CD8-positive, alpha-beta memory T cell (primary cell): ENCODE measurements at regions of chr2 and their contacts with region 1.

Region 1: DNA sequence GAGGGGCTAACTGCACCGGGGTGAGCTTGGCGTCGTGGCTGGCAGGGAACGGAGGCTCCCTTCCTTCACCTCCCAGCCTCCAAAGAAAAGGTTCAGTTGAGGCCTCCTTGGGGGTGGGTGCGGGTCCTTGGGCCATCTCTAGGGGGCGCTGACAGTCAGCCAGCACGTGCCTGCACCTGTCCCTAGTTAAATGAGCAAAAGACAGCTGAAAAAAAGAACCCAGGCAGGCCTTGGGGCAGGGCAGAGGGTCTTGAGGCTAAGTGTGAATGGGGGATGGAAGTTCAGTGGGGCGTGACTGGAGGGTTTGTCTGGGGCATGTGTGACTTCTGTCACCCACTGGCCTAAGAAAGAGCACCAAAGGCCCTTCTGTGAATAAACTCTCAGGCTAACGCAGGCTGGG is 56.4 kb downstream of the ZFP36L2 start:
- DNase-seq: peak; percentile 42 to 77 (median 67)
- H3K4me3 ChIP-seq: peak overlapping the region; percentile 57
- H3K4me3 Mint-ChIP-seq: peak overlapping the region; percentile 57 to 94 (median 84)
- H3K27ac ChIP-seq: peak overlapping the region; percentile 53
- H3K27ac Mint-ChIP-seq: peak overlapping the region; percentile 91 to 100 (median 99)
- H3K4me1 ChIP-seq: peaks cover 80% of the 10 kb centered on the region
- H3K4me1 Mint-ChIP-seq: peaks cover 73 to 85% (median 81%) of the 10 kb centered on the region in 3 donors
- H3K27me3 ChIP-seq: no peaks in the 10 kb centered on the region
- H3K27me3 Mint-ChIP-seq: peaks cover 0 to 5% of the 10 kb centered on the region in 2 donors

Region 2: DNA sequence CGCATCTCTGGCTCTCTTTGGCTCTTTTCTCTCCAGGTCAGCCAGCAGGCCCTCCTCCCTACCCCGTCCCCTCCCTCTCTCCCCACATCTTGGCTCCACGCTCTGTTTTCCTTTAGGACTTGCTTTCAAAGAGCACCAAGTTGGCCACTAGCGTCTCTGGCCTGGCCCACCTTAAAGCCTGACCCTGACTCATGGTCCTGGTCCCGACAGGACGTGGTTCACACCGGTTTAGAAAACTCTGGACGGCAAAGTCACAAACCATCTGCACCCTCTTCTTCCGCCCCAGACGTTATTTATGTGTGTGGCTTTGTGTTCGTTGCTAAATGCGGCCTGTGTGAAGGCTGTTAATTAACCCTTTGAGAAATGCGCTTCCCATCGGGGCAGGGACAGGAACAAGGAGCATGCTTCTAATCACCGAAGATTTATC is 208.6 kb before region 1 on chr2:
- CTCF ChIA-PET with region 1: no interaction called
- POLR2A ChIA-PET with region 1: no interaction called
- DNase-seq: no peak
- H3K4me3 ChIP-seq: no peak overlapping the region
- H3K4me3 Mint-ChIP-seq: peak overlapping the region in 1 of 7 donors; percentile 48
- H3K27ac ChIP-seq: no peak overlapping the region
- H3K27ac Mint-ChIP-seq: peak overlapping the region in 2 of 8 donors; percentile 41 to 46
- H3K4me1 ChIP-seq: no peaks in the 10 kb centered on the region
- H3K4me1 Mint-ChIP-seq: peaks cover 3 to 12% (median 10%) of the 10 kb centered on the region in 3 donors
- H3K27me3 ChIP-seq: no peaks in the 10 kb centered on the region
- H3K27me3 Mint-ChIP-seq: peaks cover 9 to 21% of the 10 kb centered on the region in 2 donors

Region 3: GRCh38 chr2:43149482-43150107 is 20.4 kb before region 1 on chr2:
- CTCF ChIA-PET with region 1: interaction called, 14 read pairs
- POLR2A ChIA-PET with region 1: interaction called, 3 read pairs
- DNase-seq: peak in 1 of 5 donors; percentile 63
- H3K4me3 ChIP-seq: peak overlapping the region; percentile 18
- H3K4me3 Mint-ChIP-seq: peak overlapping the region in 6 of 7 donors; percentile 27 to 80 (median 44)
- H3K27ac ChIP-seq: no peak overlapping the region
- H3K27ac Mint-ChIP-seq: peak overlapping the region; percentile 7 to 95 (median 83)
- H3K4me1 ChIP-seq: peaks cover 62% of the 10 kb centered on the region
- H3K4me1 Mint-ChIP-seq: peaks cover 41 to 71% (median 47%) of the 10 kb centered on the region in 3 donors
- H3K27me3 ChIP-seq: no peaks in the 10 kb centered on the region
- H3K27me3 Mint-ChIP-seq: peaks cover 0 to 3% of the 10 kb centered on the region in 2 donors

Region 4: DNA sequence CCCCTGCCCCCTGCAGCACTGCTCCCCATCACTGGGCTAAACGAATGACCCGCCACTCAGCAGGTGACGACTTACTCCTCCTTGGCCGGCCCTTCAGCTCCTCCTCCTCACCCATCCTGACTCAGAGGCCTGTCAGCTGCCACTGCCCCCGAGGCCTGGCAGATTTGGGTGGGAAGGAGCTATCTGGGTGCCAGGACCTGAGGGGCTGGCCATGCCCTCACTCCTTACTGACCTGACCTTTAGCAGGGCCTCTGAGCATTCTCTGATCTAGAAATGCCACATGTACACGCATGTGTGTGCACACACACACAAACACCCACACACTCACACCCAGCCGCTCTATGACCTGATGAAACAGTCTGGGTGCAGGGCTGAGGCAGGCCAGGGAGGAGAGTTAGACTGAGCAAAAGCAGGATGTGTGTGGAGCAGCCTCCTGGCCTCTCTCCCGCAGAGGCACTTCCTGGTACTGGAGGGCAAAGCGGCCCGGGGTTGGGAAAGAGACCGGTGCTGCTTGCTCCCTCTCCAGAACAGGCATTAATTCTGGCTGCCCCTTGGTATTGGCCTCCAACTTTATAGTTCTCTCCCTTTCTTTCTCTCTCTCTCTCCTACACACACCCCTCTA is 11.6 kb before region 1 on chr2:
- CTCF ChIA-PET with region 1: interaction called, 14 read pairs
- POLR2A ChIA-PET with region 1: interaction called, 6 read pairs
- DNase-seq: peak in 2 of 5 donors; percentile 43 to 72
- H3K4me3 ChIP-seq: peak overlapping the region; percentile 7
- H3K4me3 Mint-ChIP-seq: peak overlapping the region; percentile 59 to 86 (median 74)
- H3K27ac ChIP-seq: peak overlapping the region; percentile 66
- H3K27ac Mint-ChIP-seq: peak overlapping the region; percentile 92 to 99 (median 97)
- H3K4me1 ChIP-seq: peaks cover 78% of the 10 kb centered on the region
- H3K4me1 Mint-ChIP-seq: peaks cover 64 to 94% (median 71%) of the 10 kb centered on the region in 3 donors
- H3K27me3 ChIP-seq: no peaks in the 10 kb centered on the region
- H3K27me3 Mint-ChIP-seq: peaks cover 0 to 1% of the 10 kb centered on the region in 2 donors

Region 5: GRCh38 chr2:43219383-43220228 is 49.6 kb after region 1 on chr2:
- CTCF ChIA-PET with region 1: interaction called, 580 read pairs
- POLR2A ChIA-PET with region 1: interaction called, 224 read pairs
- DNase-seq: peak; percentile 64 to 94 (median 90)
- H3K4me3 ChIP-seq: peak overlapping the region; percentile 99
- H3K4me3 Mint-ChIP-seq: peak overlapping the region; percentile 80 to 99 (median 98)
- H3K27ac ChIP-seq: peak overlapping the region; percentile 97
- H3K27ac Mint-ChIP-seq: peak overlapping the region; percentile 91 to 99 (median 98)
- H3K4me1 ChIP-seq: peaks cover 40% of the 10 kb centered on the region
- H3K4me1 Mint-ChIP-seq: peaks cover 48 to 56% (median 55%) of the 10 kb centered on the region in 3 donors
- H3K27me3 ChIP-seq: no peaks in the 10 kb centered on the region
- H3K27me3 Mint-ChIP-seq: peaks cover 0 to 26% of the 10 kb centered on the region in 2 donors